Activated B cell treated with CpG ODN at 0.5 μM for 24 hours (primary cell): ENCODE measurements at regions of chr15 and their contacts with region 1.

Region 1: GRCh38 chr15:68820295-68821189 is at the start of gene ANP32A:
- DNase-seq: peak; percentile 99
- ATAC-seq: peak; percentile 72
- H3K4me3 Mint-ChIP-seq: peak within 1 kb of the TSS; percentile 97
- H3K27ac Mint-ChIP-seq: peak within 1 kb of the TSS; percentile 97
- H3K4me1 Mint-ChIP-seq: peaks cover 32% of the 10 kb centered on the region
- H3K27me3 Mint-ChIP-seq: no peaks in the 10 kb centered on the region
- CTCF ChIP-seq: no peak
- total RNA-seq, gene ANP32A: 199 and 218 TPM in 2 replicates

Region 2: GRCh38 chr15:67240235-67241131 is 1580.1 kb before region 1 on chr15:
- CTCF ChIA-PET with region 1: no interaction called
- POLR2A ChIA-PET with region 1: interaction called, 12 read pairs
- intact Hi-C with region 1: no loop called
- DNase-seq: no peak
- ATAC-seq: peak; percentile 9
- H3K4me3 Mint-ChIP-seq: peak overlapping the region; percentile 61
- H3K27ac Mint-ChIP-seq: peak overlapping the region; percentile 80
- H3K4me1 Mint-ChIP-seq: peaks cover 46% of the 10 kb centered on the region
- H3K27me3 Mint-ChIP-seq: no peaks in the 10 kb centered on the region
- CTCF ChIP-seq: no peak

Region 3: DNA sequence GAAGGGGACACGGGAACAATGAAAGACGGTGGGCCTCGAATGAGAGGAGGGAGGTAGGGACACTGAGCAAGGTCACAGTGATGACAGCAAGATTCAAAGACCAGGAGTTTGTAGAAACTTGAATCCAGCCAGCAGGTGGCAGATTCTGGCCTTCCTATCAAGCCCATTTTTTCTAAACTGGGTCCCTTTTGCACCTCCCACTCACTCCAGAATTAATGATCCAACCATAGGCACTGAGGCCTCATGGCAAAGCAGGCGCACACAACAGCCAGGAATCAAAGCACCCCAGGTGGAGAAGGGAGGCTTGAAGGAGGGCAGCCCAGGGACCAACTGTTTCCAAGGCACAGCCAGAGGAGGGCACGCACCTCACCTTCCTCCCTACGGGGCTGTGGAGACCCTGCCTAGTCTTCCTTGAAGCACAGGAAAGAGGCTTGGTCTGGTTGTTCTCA is 90.0 kb before region 1 on chr15:
- CTCF ChIA-PET with region 1: no interaction called
- POLR2A ChIA-PET with region 1: interaction called, 12 read pairs
- intact Hi-C with region 1: loop called (anchors 2 kb)
- DNase-seq: no peak
- ATAC-seq: no peak
- H3K4me3 Mint-ChIP-seq: no peak overlapping the region
- H3K27ac Mint-ChIP-seq: no peak overlapping the region
- H3K4me1 Mint-ChIP-seq: peaks cover 21% of the 10 kb centered on the region
- H3K27me3 Mint-ChIP-seq: peaks cover 2% of the 10 kb centered on the region
- CTCF ChIP-seq: no peak

Region 4: DNA sequence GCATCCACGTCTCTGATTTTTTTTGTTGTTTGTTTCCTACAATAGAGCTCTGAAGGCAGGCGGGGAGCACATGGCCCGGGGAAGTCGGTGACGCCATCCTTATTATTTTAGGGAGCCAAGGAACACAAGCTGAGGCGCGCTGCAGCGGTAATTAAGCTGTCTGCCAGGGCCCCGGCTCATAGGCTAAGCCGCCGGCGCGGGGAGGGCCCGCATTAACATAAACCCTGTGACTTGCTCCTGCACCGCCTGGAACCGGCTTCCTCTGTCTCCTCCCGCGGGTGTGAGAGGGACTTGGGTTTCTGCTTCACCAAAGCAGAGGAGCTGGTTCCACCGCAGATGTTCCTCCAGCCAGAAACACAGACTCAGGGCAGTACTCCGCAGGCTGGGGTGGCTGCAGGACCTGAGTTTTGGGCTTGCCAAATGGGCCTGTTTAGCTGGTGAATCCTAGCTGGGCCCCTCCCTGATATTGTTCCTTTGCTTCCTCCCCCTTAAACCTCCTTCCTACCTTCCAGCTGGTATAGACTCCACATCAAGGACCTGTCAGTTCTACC is 25.2 kb before region 1 on chr15:
- CTCF ChIA-PET with region 1: interaction called, 6 read pairs
- POLR2A ChIA-PET with region 1: interaction called, 167 read pairs
- intact Hi-C with region 1: loop called (anchors 1 kb)
- DNase-seq: peak; percentile 55
- ATAC-seq: peak; percentile 62
- H3K4me3 Mint-ChIP-seq: peak overlapping the region; percentile 75
- H3K27ac Mint-ChIP-seq: peak overlapping the region; percentile 85
- H3K4me1 Mint-ChIP-seq: peaks cover 97% of the 10 kb centered on the region
- H3K27me3 Mint-ChIP-seq: no peaks in the 10 kb centered on the region
- CTCF ChIP-seq: no peak

Region 5: GRCh38 chr15:68885070-68885469 is 64.5 kb after region 1 on chr15:
- CTCF ChIA-PET with region 1: no interaction called
- POLR2A ChIA-PET with region 1: no interaction called
- intact Hi-C with region 1: no loop called
- DNase-seq: no peak
- ATAC-seq: no peak
- H3K4me3 Mint-ChIP-seq: no peak overlapping the region
- H3K27ac Mint-ChIP-seq: no peak overlapping the region
- H3K4me1 Mint-ChIP-seq: peaks cover 2% of the 10 kb centered on the region
- H3K27me3 Mint-ChIP-seq: peaks cover 2% of the 10 kb centered on the region
- CTCF ChIP-seq: no peak